OCI-LY7 (cell line): ENCODE measurements at regions of chr10 and their contacts with region 1.

Region 1: GRCh38 chr10:74842301-74842954 is 16.0 kb downstream of the KAT6B start:
- DNase-seq: no peak
- H3K4me3 ChIP-seq: no peak overlapping the region
- H3K27ac ChIP-seq: no peak overlapping the region
- H3K4me1 ChIP-seq: peaks cover 3% of the 10 kb centered on the region
- CTCF ChIP-seq: no peak

Region 2: DNA sequence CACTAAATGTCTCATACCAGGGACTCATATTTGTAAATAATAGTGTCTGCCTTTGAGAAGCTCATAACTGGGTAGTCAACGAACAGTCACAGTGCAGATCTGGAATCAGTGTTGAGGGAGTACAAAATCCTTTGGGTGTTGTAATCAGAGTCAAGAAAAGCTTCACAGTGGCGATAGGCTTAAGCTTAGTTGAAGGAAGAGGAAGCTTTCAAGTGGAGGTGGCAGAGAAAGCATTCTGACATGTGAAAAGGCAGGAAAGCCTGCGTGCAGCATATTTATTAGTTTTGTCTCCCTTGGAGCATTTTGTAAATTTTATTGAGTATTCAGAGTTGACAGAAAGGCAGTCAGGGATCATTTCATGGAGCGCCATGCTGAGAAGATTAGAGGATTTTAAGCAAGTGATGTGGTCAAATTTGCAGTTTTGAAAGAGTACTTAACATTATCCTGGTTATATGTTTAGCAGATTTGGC is 586.5 kb before region 1 on chr10:
- CTCF ChIA-PET with region 1: no interaction called
- POLR2A ChIA-PET with region 1: no interaction called
- intact Hi-C with region 1: no loop called
- DNase-seq: no peak
- H3K4me3 ChIP-seq: no peak overlapping the region
- H3K27ac ChIP-seq: no peak overlapping the region
- H3K4me1 ChIP-seq: no peaks in the 10 kb centered on the region
- CTCF ChIP-seq: no peak

Region 3: GRCh38 chr10:74855027-74855426 is 12.6 kb after region 1 on chr10:
- CTCF ChIA-PET with region 1: no interaction called
- POLR2A ChIA-PET with region 1: interaction called, 15 read pairs
- intact Hi-C with region 1: no loop called
- DNase-seq: peak; percentile 66
- H3K4me3 ChIP-seq: peak overlapping the region; percentile 46
- H3K27ac ChIP-seq: peak overlapping the region; percentile 71
- H3K4me1 ChIP-seq: peaks cover 40% of the 10 kb centered on the region
- CTCF ChIP-seq: no peak